Left ventricle myocardium superior (tissue), 1 donor: ENCODE measurements at regions of chr21 and their contacts with region 1.

Region 1: GRCh38 chr21:32674731-32675130 is 53.1 kb downstream of the SYNJ1 start:
- DNase-seq: no peak
- ATAC-seq: no peak

Region 2: GRCh38 chr21:32427958-32428623 is 246.6 kb before region 1 on chr21:
- intact Hi-C with region 1: no loop called
- DNase-seq: no peak
- ATAC-seq: peak; percentile 36

Region 3: DNA sequence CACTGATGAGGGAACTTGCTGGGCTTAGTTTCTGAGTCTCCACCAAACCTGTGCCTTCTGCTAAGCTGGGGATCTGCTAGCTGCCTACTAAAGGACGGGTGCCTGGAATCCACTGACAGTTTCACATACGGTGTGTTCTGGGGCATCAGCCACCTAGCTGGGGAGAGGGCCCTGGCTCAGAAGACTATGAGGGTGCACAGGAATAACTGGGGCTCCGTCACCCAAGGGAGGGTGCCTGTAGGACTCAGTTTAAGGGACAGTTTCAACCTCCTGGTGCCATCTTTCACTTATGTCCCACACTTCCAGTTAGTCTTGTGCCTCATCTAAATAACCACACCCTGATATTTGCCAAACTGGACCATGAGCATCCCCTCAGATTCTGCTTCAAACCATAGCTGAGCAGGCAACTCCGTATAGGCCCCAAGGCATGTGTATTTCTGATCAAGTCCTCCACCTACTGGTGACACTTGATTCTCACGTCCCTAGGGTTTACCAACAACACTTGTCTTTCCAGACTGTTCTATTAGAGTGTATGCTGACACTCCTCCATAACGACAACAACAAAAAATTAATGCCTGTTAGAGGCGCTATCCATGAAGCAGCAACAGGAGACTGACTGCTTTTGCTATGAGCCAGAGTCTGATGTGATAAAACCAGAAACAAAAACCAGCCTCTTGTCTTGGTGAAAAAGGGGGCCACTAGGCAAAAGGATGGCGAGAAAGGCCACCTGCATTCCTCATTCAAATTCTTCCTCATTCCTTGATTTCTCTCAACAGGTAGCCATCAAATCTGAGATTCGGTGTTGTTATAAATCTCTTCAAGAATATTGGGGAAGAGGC is 151.8 kb after region 1 on chr21:
- intact Hi-C with region 1: loop called (anchors 5 kb)
- DNase-seq: no peak
- ATAC-seq: peak; percentile 74